GM10248 (cell line): ENCODE measurements at regions of chr2 and their contacts with region 1.

Region 1: GRCh38 chr2:143110758-143111428 is 18.3 kb upstream of the ARHGAP15 start:
- DNase-seq: peak; percentile 29
- CTCF ChIP-seq: peak; percentile 68

Region 2: DNA sequence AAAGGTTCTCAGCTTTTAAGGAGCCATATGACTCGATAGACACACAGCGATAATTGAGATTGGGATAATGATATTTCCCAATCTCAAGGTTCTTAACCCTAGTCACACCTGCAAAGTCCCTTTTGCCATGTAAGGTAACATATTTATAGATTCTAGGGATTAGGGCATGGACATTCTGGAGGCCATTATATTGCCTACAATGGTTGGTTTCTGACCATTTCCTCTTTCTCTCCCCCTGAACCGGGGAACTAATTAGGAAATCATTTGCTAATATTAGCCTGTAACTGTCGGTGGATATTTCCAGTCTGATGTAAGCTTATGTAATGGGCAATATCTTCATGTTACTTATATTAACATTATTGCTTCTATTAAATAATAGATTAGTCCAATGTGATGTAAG is 22.5 kb before region 1 on chr2:
- CTCF ChIA-PET with region 1: interaction called, 11 read pairs
- POLR2A ChIA-PET with region 1: no interaction called
- DNase-seq: no peak
- CTCF ChIP-seq: no peak

Region 3: GRCh38 chr2:143121079-143121478 is 10.2 kb after region 1 on chr2:
- CTCF ChIA-PET with region 1: interaction called, 42 read pairs
- POLR2A ChIA-PET with region 1: no interaction called
- DNase-seq: no peak
- CTCF ChIP-seq: no peak

Region 4: DNA sequence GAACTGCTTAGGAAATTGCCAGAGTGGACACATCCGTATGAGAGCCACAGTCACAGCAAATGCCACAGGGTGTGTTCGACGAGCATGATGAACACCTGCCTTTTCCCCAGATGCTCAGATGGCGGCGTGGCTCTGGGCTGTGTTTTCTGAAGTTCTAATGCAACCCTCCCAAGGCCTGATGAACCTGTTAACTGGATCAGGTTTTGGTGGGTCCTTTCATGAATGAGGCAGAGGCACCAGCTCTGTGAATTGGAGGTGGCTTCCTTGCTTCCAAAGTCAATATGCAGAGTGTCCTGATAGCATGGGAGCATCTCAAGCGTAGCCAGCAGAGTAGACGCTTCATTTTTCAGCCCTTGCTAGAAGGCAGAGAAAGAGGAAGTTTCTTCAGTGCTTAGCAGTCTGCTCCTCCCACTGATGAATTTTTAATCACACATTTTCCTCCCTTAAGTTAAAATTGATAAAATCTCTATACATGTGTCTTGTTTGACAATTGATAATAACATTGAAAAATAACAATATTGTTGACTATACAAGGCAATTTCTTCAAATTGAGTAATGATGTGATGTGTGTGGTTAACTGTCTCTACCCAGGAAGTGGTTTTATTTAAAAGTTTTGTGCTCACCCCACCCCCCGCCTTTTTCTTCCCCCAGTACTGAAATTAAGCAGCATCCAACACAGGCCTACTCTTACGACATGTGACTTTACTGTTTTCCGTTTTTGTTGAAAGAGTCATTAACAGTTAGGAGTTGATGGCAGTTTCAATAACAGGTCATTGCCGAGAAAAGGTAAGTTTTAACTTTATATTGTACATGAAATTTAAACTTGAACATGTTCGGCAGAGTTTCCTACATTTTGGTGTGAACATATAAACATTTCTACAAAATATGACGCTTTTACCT is 18.0 kb after region 1 on chr2 and contains the start of gene ARHGAP15:
- CTCF ChIA-PET with region 1: interaction called, 42 read pairs
- POLR2A ChIA-PET with region 1: no interaction called
- DNase-seq: peak; percentile 56
- CTCF ChIP-seq: peak; percentile 6

Region 5: GRCh38 chr2:143204062-143204461 is 93.2 kb after region 1 on chr2:
- CTCF ChIA-PET with region 1: interaction called, 10 read pairs
- POLR2A ChIA-PET with region 1: no interaction called
- DNase-seq: no peak
- CTCF ChIP-seq: no peak

Region 6: DNA sequence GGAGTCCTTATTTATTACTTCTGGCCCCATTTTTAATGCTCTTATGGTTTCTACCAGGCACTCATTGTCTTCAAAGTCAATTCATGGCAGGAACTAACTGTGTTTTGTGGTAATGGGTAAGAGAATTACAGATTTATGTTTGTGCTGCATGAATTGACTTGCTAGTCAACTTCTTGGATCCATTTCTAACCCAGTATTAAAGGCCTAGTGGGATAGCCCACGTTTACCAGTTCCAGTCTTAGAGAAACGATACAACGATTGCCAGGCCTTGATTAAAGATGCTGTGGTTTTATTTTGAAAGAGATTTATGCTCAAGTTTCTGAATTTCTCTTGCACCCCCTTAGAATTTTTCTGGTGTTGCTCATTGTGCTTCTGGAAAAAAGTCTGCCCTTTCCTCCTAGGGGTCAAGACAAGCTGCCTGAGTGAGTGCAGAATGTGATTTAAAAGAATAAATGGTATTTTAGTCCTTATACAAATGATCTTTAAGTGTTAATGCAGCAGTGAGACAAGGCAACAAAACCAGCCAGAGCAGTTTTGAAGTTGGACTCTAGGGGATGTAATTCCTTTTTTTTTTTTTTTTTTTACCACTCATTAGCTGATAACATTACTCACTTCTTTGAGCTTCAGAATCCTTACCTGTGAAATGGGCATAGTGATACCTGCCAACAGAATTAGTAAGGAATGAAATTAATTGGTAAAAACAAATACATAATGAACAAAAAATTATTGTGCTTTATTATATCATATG is 119.8 kb after region 1 on chr2:
- CTCF ChIA-PET with region 1: interaction called, 87 read pairs
- POLR2A ChIA-PET with region 1: no interaction called
- DNase-seq: no peak
- CTCF ChIP-seq: no peak

Region 7: GRCh38 chr2:143259368-143259958 is 148.6 kb after region 1 on chr2:
- CTCF ChIA-PET with region 1: interaction called, 70 read pairs
- POLR2A ChIA-PET with region 1: no interaction called
- DNase-seq: peak; percentile 13
- CTCF ChIP-seq: peak; percentile 67

Region 8: GRCh38 chr2:143877876-143878530 is 767.1 kb after region 1 on chr2:
- CTCF ChIA-PET with region 1: no interaction called
- POLR2A ChIA-PET with region 1: no interaction called
- DNase-seq: no peak
- CTCF ChIP-seq: no peak